SK-N-SH (cell line): ENCODE measurements at regions of chr5 and their contacts with region 1.

Region 1: GRCh38 chr5:177454397-177455035 is 7.9 kb downstream of the PRR7 start:
- DNase-seq: peak; percentile 95
- H3K4me3 ChIP-seq: peak overlapping the region; percentile 47 to 48
- H3K27ac ChIP-seq: peak overlapping the region; percentile 61 to 91
- H3K4me1 ChIP-seq: peaks cover 13 to 85% of the 10 kb centered on the region in 2 experiments
- H3K27me3 ChIP-seq: no peaks in the 10 kb centered on the region
- CTCF ChIP-seq: peak; percentile 77
- EP300 ChIP-seq: no peak
- RAD21 ChIP-seq: peak; percentile 86

Region 2: DNA sequence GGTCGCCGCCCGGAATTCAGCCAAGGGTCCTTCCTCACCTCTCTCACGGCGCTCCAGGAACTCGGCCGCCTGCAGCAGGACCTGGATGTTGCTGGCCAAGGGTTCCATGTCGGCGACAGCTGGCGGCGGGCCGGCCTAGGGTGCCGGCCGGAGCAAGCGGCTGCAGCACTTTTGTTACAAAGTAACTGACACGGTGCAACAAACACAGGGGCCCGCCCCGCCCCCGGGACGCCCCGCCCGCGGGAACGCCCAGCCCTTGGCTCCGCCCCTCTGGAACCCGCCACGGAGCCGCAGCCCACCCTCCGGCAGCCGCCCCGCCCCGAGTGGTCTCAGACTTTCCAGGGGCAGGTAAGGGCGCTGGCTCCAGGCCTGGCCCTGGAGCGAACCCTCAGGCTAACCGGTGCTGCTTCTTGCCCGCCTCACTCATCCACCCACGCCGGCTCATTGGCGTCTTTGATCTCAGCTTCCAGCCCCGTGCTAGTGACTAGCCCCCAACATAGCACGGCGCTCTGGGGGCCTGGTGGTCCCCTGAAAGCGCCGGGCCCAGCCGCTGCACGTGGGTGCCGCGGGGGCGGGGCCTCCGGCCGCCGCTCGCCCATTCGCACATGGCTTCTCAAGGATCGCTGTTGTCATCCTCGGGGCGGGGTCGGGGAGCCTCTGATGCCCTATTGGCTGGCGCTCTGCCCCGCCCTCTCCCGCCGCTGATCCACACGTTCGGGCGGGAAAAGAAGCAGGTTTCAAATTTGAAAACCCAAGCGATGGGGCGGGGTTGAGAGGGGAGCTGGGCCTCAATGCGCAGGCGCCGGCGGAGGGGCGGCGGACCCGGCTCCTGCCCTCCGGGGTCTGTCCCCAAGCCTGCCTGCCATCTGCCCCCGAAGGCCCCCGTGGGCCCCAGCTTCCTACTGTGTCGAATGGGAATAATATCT is 142.5 kb before region 1 on chr5 and contains the start of gene MXD3:
- CTCF ChIA-PET with region 1: interaction called, 13 read pairs
- POLR2A ChIA-PET with region 1: interaction called, 3 read pairs
- DNase-seq: peak; percentile 97
- H3K4me3 ChIP-seq: peak within 1 kb of the TSS; percentile 59 to 84
- H3K27ac ChIP-seq: peak within 1 kb of the TSS; percentile 73 to 88
- H3K4me1 ChIP-seq: peaks cover 4 to 25% of the 10 kb centered on the region in 2 experiments; a peak in 1 of 4 replicates
- H3K27me3 ChIP-seq: no peaks in the 10 kb centered on the region
- CTCF ChIP-seq: no peak
- EP300 ChIP-seq: 0 out of 4 replicates have a peak, but pooled peaks of 1 of the 2 experiments have one; percentile 39
- RAD21 ChIP-seq: no peak
- polyA plus RNA-seq, gene MXD3: 22.6 and 23.1 TPM in 2 replicates

Region 3: DNA sequence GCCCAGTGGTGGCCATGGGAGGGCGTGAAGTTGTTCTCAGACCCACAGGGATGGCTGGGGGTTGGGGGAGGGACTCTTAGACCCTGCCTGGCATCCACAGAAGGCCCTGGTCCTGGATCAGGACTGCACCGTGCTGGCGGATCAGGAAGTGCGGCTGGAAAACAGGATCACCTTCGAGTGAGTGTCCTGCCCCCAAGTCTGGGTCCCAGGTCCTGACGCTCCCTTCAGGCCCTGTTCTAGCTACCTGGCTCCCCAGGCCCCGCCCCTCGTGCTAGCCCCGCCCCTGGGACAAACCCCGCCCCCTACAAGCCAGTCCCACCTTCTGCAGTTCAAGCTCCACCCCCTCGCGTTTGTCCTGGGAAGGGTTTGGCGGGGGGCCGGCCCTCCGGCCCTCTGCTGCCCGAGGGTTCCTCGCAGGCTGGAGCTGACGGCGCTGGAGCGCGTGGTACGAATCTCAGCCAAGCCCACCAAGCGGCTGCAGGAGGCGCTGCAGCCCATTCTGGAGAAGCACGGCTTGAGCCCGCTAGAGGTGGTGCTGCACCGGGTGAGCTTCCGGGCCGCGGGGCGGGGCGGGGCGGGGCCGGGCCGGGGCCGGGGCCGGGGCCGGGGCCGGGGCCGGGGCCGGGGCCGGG is 83.9 kb before region 1 on chr5:
- CTCF ChIA-PET with region 1: interaction called, 14 read pairs
- POLR2A ChIA-PET with region 1: no interaction called
- DNase-seq: peak; percentile 92
- H3K4me3 ChIP-seq: peak overlapping the region; percentile 55 to 56; a peak in 3 of 4 replicates
- H3K27ac ChIP-seq: no peak overlapping the region
- H3K4me1 ChIP-seq: peaks cover 6 to 37% of the 10 kb centered on the region in 2 experiments; a peak in 3 of 4 replicates
- H3K27me3 ChIP-seq: no peaks in the 10 kb centered on the region
- CTCF ChIP-seq: peak; percentile 49
- EP300 ChIP-seq: no peak
- RAD21 ChIP-seq: peak; percentile 37; the same call in 1 of the 2 replicates

Region 4: GRCh38 chr5:177390363-177391300 is 63.9 kb before region 1 on chr5:
- CTCF ChIA-PET with region 1: interaction called, 318 read pairs
- POLR2A ChIA-PET with region 1: interaction called, 22 read pairs
- DNase-seq: peak; percentile 95
- H3K4me3 ChIP-seq: no peak overlapping the region; a peak in 1 of 4 replicates
- H3K27ac ChIP-seq: no peak overlapping the region
- H3K4me1 ChIP-seq: peaks cover 0 to 3% of the 10 kb centered on the region in 2 experiments; a peak in 1 of 4 replicates
- H3K27me3 ChIP-seq: no peaks in the 10 kb centered on the region
- CTCF ChIP-seq: peak; percentile 88
- EP300 ChIP-seq: no peak
- RAD21 ChIP-seq: peak; percentile 95

Region 5: DNA sequence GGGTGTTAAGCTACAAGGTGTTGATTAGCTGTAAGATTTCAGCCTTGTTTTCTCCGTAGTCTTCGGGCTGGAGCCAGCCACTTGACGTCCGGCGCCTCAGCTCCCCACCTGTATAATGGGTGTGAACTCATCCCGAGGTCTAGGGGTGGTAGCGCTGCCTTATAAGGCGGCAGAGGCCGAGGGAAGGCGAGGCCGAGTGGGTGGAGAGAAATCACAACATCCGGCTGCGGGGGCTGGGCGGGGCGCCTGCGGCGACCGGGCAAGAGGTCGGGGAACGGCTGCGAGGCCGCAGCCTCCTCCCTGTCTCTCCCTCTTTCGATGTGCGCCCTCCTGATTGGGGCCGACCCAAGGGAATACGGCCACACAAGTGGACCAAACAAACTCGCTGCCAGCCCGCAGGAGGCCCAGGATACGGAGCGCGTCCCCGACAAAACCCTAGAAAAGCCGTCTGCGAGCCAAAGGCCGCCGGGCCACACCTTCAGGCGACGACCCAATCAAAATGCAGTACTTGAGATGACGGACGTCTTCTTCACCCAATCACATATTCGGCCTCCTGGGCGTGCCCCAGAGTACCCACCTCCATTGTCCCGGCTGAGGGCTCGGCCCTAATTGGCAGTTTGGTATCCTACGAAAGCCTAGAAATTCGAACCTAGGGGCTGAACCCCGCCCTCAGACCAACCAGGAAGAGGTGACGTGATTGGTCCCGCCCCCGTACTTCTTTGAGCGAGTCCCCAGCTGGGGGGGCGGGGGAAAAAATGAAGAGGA is 28.5 kb before region 1 on chr5:
- CTCF ChIA-PET with region 1: interaction called, 54 read pairs
- POLR2A ChIA-PET with region 1: interaction called, 3 read pairs
- DNase-seq: peak; percentile 99
- H3K4me3 ChIP-seq: peak overlapping the region; percentile 53 to 68
- H3K27ac ChIP-seq: peak overlapping the region; percentile 89 to 92
- H3K4me1 ChIP-seq: peaks cover 5 to 33% of the 10 kb centered on the region in 2 experiments; a peak in 2 of 4 replicates
- H3K27me3 ChIP-seq: no peaks in the 10 kb centered on the region
- CTCF ChIP-seq: no peak
- EP300 ChIP-seq: no peak
- RAD21 ChIP-seq: no peak

Region 6: DNA sequence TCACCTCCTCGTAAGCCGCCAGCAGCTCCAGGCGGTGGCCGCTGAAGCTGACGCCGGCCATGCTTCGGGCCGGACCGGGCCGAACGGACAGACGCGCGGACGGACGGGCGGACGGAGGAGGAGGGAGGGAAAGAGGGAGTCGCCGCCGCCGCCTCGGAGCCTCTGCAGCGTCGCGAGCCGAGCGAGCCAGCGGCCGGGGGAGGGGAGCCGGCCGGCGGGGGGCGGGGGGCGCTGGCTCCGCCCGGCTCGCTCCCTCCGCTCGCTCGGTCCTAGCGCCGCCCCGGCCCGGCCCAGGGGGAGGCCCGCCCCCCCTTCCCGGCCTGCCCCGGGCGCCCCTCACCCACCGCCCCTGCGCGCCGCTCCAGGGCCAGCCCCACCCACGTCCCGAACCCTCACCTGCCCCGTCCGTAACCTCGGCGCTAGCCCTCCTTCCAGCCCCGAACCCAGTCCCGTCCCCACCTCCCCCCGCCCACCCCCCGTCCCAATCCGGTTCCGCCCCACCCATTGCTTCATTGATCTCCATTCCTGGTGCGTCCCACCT is 19.0 kb after region 1 on chr5 and contains the start of gene DBN1:
- CTCF ChIA-PET with region 1: interaction called, 215 read pairs
- POLR2A ChIA-PET with region 1: interaction called, 43 read pairs
- DNase-seq: peak; percentile 98
- H3K4me3 ChIP-seq: peak within 1 kb of the TSS; percentile 96
- H3K27ac ChIP-seq: peak within 1 kb of the TSS; percentile 52 to 92; a peak in 3 of 4 replicates
- H3K4me1 ChIP-seq: peaks cover 35 to 76% of the 10 kb centered on the region in 2 experiments; a peak in 3 of 4 replicates
- H3K27me3 ChIP-seq: no peaks in the 10 kb centered on the region
- CTCF ChIP-seq: no peak
- EP300 ChIP-seq: no peak
- RAD21 ChIP-seq: no peak
- polyA plus RNA-seq, gene DBN1: 176 and 244 TPM in 2 replicates

Region 7: GRCh38 chr5:177497292-177498033 is 42.9 kb after region 1 on chr5 and contains the start of gene PDLIM7:
- CTCF ChIA-PET with region 1: interaction called, 228 read pairs
- POLR2A ChIA-PET with region 1: interaction called, 5 read pairs
- DNase-seq: peak; percentile 98
- H3K4me3 ChIP-seq: peak within 1 kb of the TSS; percentile 83 to 94
- H3K27ac ChIP-seq: peak within 1 kb of the TSS; percentile 80 to 94
- H3K4me1 ChIP-seq: peaks cover 32 to 62% of the 10 kb centered on the region in 2 experiments; a peak in 3 of 4 replicates
- H3K27me3 ChIP-seq: no peaks in the 10 kb centered on the region
- CTCF ChIP-seq: no peak; the same call in 1 of the 2 replicates
- EP300 ChIP-seq: no peak
- RAD21 ChIP-seq: no peak
- polyA plus RNA-seq, gene PDLIM7: 183 and 206 TPM in 2 replicates